Gastrocnemius medialis (tissue), 4 donors: ENCODE measurements at regions of chr14 and their contacts with region 1.

Region 1: DNA sequence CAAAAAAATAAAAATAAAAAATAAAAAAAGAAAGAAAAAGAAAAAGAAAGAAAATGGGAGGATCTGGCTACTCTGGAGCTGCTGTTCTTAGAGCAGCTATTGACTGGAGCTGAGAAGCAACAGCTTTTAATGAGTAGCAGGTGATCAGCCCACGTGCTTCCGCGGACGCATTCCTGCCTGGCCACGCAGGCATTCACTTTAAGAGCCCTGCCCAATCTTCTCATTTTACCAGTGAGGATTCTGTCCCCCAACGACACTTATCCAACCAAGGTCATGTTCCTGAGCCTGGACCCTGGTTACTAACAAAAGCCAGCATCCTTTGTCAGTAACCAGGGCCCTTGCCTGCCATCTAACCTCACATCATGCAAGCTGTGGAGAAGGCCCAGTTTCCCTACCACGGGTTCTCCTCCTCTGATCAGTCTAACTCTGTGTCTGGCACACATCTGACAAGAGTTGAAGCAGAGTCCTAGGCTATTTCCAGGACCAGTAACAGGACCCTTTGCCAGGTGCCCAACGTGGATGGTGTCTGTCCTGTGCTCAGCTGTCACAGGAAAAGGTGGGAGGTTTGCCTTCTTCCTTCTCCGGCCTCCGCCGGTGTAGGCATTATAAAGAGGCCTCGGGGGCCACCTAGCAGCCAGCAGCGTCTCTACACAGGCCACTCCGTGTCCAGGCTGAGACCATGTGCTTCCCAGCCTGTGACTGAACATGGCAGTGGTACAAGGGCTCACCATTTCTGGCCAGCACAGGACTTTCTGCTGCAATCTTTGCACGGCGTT is 60.9 kb upstream of the GPATCH2L start:
- DNase-seq: peak; percentile 83 to 88
- ATAC-seq: peak; percentile 90 to 92
- H3K4me3 ChIP-seq: peak overlapping the region in 1 of 4 donors; percentile 10
- H3K27ac ChIP-seq: peak overlapping the region; percentile 72 to 93 (median 82)
- H3K4me1 ChIP-seq: peaks cover 48 to 51% of the 10 kb centered on the region in 2 donors
- H3K27me3 ChIP-seq: no peaks in the 10 kb centered on the region
- CTCF ChIP-seq: peak; percentile 44 to 70 (median 50)
- POLR2A ChIP-seq: peak in 1 of 2 donors; percentile 25

Region 2: DNA sequence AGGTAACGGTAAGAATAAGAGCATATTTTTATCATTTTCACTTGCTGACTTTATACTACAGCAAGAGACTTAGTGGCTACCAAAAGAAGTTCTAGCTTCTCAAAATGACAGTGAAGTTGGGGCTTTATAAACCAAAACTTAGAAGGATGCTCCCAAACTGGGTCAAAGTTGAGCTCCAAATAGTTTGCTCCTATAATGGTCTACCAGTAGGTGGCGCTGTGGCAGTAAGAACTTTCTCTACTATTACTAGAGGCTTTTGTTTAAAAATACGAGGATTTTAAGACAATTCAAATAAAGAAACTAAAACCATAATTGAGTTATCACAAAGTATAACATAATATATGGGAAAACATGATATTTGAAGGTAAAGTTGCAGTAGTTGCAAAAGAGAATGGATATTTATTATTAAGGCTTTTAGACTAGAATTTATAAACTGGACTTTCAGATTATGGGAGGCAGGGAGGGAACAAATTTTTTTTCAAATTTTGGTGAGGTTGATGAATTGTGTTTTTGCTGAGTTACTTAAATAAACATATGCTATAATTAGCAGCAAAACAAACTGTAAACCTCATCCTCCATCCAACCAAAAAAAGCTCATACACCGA is 184.0 kb before region 1 on chr14:
- in situ Hi-C with region 1: no loop called
- intact Hi-C with region 1: loop called (anchors 2 kb)
- DNase-seq: peak; percentile 35 to 37
- ATAC-seq: peak in 1 of 2 donors; percentile 41
- H3K4me3 ChIP-seq: no peak overlapping the region
- H3K27ac ChIP-seq: peak overlapping the region; percentile 55 to 81 (median 70)
- H3K4me1 ChIP-seq: peaks cover 29 to 44% of the 10 kb centered on the region in 2 donors
- H3K27me3 ChIP-seq: no peaks in the 10 kb centered on the region
- CTCF ChIP-seq: peak; percentile 79 to 91 (median 88)
- POLR2A ChIP-seq: no peak

Region 3: GRCh38 chr14:75934998-75935628 is 155.7 kb before region 1 on chr14:
- in situ Hi-C with region 1: no loop called
- intact Hi-C with region 1: loop called (anchors 5 kb)
- DNase-seq: no peak
- ATAC-seq: peak; percentile 94 to 95
- H3K4me3 ChIP-seq: no peak overlapping the region
- H3K27ac ChIP-seq: peak overlapping the region; percentile 82 to 86 (median 86)
- H3K4me1 ChIP-seq: peaks cover 14 to 35% of the 10 kb centered on the region in 2 donors
- H3K27me3 ChIP-seq: no peaks in the 10 kb centered on the region
- CTCF ChIP-seq: no peak
- POLR2A ChIP-seq: peak in 1 of 2 donors; percentile 33

Region 4: GRCh38 chr14:76050797-76051392 is 39.9 kb before region 1 on chr14:
- in situ Hi-C with region 1: loop called in 1 of 4 experiments (anchors 5 kb)
- intact Hi-C with region 1: loop called (anchors 1 kb)
- DNase-seq: peak; percentile 11 to 29
- ATAC-seq: peak; percentile 75 to 84
- H3K4me3 ChIP-seq: no peak overlapping the region
- H3K27ac ChIP-seq: no peak overlapping the region
- H3K4me1 ChIP-seq: no peaks in the 10 kb centered on the region
- H3K27me3 ChIP-seq: no peaks in the 10 kb centered on the region
- CTCF ChIP-seq: peak; percentile 75 to 86 (median 80)
- POLR2A ChIP-seq: no peak

Region 5: DNA sequence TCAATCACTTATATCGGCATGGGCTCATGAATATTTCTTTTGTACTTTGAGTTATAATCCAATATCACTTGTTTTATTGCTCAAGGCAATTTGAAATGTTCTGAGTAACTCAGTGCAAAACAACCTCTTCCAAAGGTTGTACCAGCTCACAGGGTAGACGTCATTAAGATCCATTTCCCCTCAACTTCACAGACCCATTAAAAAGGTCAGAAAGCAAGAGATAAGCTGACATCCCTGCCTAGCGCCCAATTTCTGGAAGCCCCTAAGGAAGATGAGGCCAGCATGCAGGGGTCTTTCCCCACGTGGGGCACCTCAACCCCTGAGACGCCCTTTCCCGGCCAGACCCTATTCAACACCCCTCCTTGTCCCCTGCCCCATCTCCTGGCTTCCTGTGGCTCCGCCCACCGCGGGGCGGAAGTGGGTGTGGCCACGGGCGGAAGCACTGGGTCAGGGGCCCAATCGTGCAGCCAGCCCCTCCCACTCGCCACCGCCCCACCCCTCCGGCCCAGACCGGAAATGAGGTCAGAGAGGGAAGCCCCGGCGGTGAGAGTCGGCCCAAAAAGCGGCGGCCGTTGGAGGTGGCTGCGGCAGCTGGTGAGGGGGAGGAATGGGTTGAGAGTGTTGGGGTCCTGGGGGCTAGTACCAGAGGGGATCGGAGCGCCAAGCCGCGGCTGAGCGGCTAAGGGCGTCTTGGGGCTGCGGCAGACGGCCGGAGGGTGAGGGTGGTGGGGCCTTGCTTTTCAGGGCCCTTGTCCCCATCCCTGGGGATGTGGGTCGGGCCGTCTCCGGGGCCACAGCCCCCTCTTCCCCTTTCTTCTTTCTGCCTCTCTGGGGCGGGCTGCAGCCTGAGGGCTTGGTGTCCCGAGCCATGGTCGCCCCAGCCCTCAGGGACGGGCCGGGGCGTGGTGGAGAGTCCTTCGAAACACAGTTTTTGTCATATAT is 60.9 kb after region 1 on chr14 and contains the start of gene GPATCH2L:
- in situ Hi-C with region 1: no loop called
- intact Hi-C with region 1: loop called (anchors 2 kb)
- DNase-seq: peak; percentile 89 to 95
- ATAC-seq: peak; percentile 90 to 95
- H3K4me3 ChIP-seq: peak within 1 kb of the TSS; percentile 81 to 99 (median 92)
- H3K27ac ChIP-seq: peak within 1 kb of the TSS; percentile 83 to 95 (median 94)
- H3K4me1 ChIP-seq: peaks cover 42 to 44% of the 10 kb centered on the region in 2 donors
- H3K27me3 ChIP-seq: no peaks in the 10 kb centered on the region
- CTCF ChIP-seq: no peak
- POLR2A ChIP-seq: peak; percentile 93
- total RNA-seq, gene GPATCH2L: 24.6 to 63.5 (median 41.9) TPM

Region 6: GRCh38 chr14:76314521-76315034 is 223.8 kb after region 1 on chr14:
- in situ Hi-C with region 1: no loop called
- intact Hi-C with region 1: loop called (anchors 5 kb)
- DNase-seq: no peak
- ATAC-seq: no peak
- H3K4me3 ChIP-seq: no peak overlapping the region
- H3K27ac ChIP-seq: peak overlapping the region in 2 of 4 donors; percentile 15 to 36
- H3K4me1 ChIP-seq: peaks cover 18 to 24% of the 10 kb centered on the region in 2 donors
- H3K27me3 ChIP-seq: no peaks in the 10 kb centered on the region
- CTCF ChIP-seq: no peak
- POLR2A ChIP-seq: no peak

Region 7: GRCh38 chr14:76352639-76353281 is 262.0 kb after region 1 on chr14:
- in situ Hi-C with region 1: no loop called
- intact Hi-C with region 1: loop called (anchors 2 kb)
- DNase-seq: peak; percentile 26 to 37
- ATAC-seq: peak; percentile 86 to 91
- H3K4me3 ChIP-seq: peak overlapping the region; percentile 49 to 55 (median 52)
- H3K27ac ChIP-seq: peak overlapping the region; percentile 69 to 74 (median 70)
- H3K4me1 ChIP-seq: peaks cover 19 to 26% of the 10 kb centered on the region in 2 donors
- H3K27me3 ChIP-seq: no peaks in the 10 kb centered on the region
- CTCF ChIP-seq: peak; percentile 76 to 94 (median 88)
- POLR2A ChIP-seq: no peak